IMR-90 (cell line): ENCODE measurements at regions of chr1 and their contacts with region 1.

Region 1: GRCh38 chr1:179365320-179366092 is at the start of gene AXDND1:
- DNase-seq: peak; percentile 80
- ATAC-seq: peak; percentile 95
- H3K4me3 ChIP-seq: peak within 1 kb of the TSS; percentile 58
- H3K27ac ChIP-seq: peak within 1 kb of the TSS; percentile 91
- H3K4me1 ChIP-seq: peaks cover 3% of the 10 kb centered on the region; the same call in 1 of the 2 replicates
- H3K27me3 ChIP-seq: no peaks in the 10 kb centered on the region
- CTCF ChIP-seq: peak; percentile 28
- POLR2A ChIP-seq: no peak; the same call in 1 of the 2 replicates
- RAD21 ChIP-seq: no peak
- total RNA-seq, gene AXDND1: under 0.01 TPM in 1 of 2 replicates, not detected in the other

Region 2: GRCh38 chr1:178294654-178295053 is 1070.9 kb before region 1 on chr1:
- CTCF ChIA-PET with region 1: no interaction called
- POLR2A ChIA-PET with region 1: no interaction called
- dilution Hi-C with region 1: no loop called
- in situ Hi-C with region 1: no loop called
- intact Hi-C with region 1: loop called (anchors 5 kb)
- DNase-seq: no peak
- ATAC-seq: no peak
- H3K4me3 ChIP-seq: no peak overlapping the region
- H3K27ac ChIP-seq: no peak overlapping the region
- H3K4me1 ChIP-seq: peaks cover 3% of the 10 kb centered on the region
- H3K27me3 ChIP-seq: no peaks in the 10 kb centered on the region
- CTCF ChIP-seq: no peak
- POLR2A ChIP-seq: no peak
- RAD21 ChIP-seq: no peak

Region 3: DNA sequence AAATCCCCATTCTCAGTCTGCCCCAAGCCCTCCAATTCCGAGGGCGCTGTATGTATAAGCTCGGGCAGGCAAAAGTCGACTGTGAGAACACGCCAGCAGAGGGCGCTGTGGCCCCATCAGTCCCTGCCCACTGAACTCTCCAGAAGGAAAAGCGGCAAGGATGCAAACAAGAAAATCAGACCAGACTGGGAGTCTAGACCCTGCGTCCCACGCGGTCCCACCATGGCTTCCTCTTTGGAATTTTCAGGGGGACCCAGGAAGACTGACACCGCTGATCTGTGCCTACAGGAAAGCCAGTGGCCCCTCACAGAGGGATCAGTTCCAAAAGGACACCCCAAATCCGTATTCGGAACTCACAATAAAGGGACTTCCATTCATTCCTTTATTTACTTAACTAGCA is 833.1 kb before region 1 on chr1:
- CTCF ChIA-PET with region 1: no interaction called
- POLR2A ChIA-PET with region 1: no interaction called
- dilution Hi-C with region 1: no loop called
- in situ Hi-C with region 1: loop called (anchors 10 kb)
- intact Hi-C with region 1: loop called (anchors 5 kb)
- DNase-seq: peak; percentile 78
- ATAC-seq: peak; percentile 53
- H3K4me3 ChIP-seq: no peak overlapping the region
- H3K27ac ChIP-seq: no peak overlapping the region
- H3K4me1 ChIP-seq: peaks cover 19% of the 10 kb centered on the region
- H3K27me3 ChIP-seq: no peaks in the 10 kb centered on the region
- CTCF ChIP-seq: peak; percentile 92
- POLR2A ChIP-seq: no peak
- RAD21 ChIP-seq: peak; percentile 93

Region 4: DNA sequence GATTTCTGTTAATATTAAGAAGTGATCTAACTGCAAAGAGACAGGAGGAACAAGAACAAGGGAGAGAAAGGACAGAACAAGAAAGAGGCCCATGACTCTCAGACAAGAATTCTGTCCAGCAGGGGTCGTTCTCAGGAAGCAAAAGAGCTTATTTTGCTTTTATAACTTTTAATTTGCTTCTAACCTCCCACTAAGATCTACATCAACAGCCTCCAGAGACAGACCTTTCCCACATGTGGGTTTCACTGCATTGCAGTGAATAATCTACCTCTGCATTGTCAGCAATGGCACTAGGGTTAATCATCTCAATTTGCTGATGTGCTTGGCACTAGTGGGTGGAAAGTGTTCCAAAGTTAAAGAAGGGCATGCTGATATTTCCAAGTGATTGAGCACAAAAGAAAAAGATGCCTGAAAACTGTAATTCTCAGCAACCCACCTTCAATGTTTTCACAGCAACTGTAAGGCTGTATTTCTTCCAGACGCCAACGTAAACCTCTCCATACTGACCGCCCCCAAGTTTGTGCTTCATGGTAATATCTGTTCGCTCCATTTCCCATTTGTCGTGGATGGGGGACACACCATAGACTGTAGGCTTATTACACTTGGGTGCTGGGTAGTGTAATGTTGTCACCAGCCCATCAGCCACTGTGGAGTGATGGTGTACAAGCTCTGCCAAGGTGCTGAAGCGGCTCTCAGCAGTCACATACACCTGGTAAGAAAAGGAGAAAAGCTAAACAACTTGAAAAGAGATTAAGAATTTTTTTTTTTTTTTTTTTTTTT is 244.2 kb before region 1 on chr1:
- CTCF ChIA-PET with region 1: no interaction called
- POLR2A ChIA-PET with region 1: no interaction called
- dilution Hi-C with region 1: no loop called
- in situ Hi-C with region 1: no loop called
- intact Hi-C with region 1: loop called (anchors 2 kb)
- DNase-seq: peak; percentile 62
- ATAC-seq: peak; percentile 66
- H3K4me3 ChIP-seq: no peak overlapping the region
- H3K27ac ChIP-seq: no peak overlapping the region; the same call in 1 of the 2 replicates
- H3K4me1 ChIP-seq: peaks cover 5% of the 10 kb centered on the region
- H3K27me3 ChIP-seq: no peaks in the 10 kb centered on the region
- CTCF ChIP-seq: peak; percentile 64
- POLR2A ChIP-seq: no peak
- RAD21 ChIP-seq: peak; percentile 62

Region 5: GRCh38 chr1:179251675-179252074 is 113.8 kb before region 1 on chr1:
- CTCF ChIA-PET with region 1: interaction called, 6 read pairs
- POLR2A ChIA-PET with region 1: interaction called, 10 read pairs
- dilution Hi-C with region 1: no loop called
- in situ Hi-C with region 1: loop called (anchors 5 kb)
- intact Hi-C with region 1: loop called (anchors 1 kb)
- DNase-seq: peak; percentile 67
- ATAC-seq: peak; percentile 88
- H3K4me3 ChIP-seq: no peak overlapping the region
- H3K27ac ChIP-seq: no peak overlapping the region
- H3K4me1 ChIP-seq: peaks cover 2% of the 10 kb centered on the region; the same call in 1 of the 2 replicates
- H3K27me3 ChIP-seq: no peaks in the 10 kb centered on the region
- CTCF ChIP-seq: peak; percentile 68
- POLR2A ChIP-seq: no peak
- RAD21 ChIP-seq: peak; percentile 73

Region 6: DNA sequence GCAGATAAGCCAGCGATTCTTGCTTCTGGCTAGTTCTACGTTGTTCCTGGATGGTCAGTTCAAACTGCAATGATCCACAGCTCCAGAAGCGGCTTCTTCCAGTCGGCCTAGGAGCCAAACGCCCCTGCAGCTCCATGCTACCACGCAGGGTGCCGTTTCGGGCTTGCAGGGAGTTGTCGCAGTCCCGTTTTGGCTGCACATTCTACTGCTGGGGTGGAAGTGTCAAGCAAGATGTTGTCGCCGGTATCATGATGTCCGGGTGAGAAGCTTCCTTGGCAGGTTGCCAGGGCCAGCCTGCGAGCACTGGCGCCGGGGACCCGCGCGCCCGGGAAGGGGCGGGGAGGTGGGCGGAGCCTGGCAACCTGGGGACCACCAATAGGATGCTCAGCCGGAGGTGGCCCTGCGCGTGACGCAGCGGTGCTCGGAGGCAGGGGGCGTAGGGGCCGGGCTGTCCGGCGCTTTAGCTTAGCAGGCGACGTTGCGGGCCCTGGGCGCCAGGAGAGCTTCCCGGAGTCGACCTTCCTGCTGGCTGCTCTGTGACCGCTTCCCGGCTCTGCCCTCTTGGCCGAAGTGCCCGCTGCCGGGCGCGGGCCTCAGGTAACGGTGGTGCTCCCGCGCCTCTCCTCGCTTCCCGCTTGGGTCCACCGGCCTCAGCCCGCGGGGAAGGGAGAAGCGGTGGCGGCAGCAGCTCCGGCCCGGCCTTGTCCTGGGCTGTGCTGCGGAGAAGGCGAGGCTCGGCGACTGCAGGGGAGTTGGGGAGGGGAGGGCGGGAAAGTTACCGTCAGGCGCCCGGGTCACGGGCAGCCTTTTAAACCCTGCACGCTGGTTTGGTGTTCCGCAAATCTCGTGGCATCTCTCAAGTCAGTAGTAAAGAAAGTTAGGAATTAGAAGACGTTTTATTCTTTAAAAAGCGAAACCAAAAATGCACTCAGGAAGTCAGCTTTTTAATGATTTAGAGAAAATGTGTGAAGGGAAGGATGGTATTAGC is 71.9 kb before region 1 on chr1 and contains the start of gene SOAT1:
- CTCF ChIA-PET with region 1: interaction called, 3 read pairs
- POLR2A ChIA-PET with region 1: interaction called, 4 read pairs
- dilution Hi-C with region 1: no loop called
- in situ Hi-C with region 1: no loop called
- intact Hi-C with region 1: loop called (anchors 1 kb)
- DNase-seq: peak; percentile 88
- ATAC-seq: peak; percentile 98
- H3K4me3 ChIP-seq: peak within 1 kb of the TSS; percentile 85
- H3K27ac ChIP-seq: peak within 1 kb of the TSS; percentile 89
- H3K4me1 ChIP-seq: peaks cover 2% of the 10 kb centered on the region; the same call in 1 of the 2 replicates
- H3K27me3 ChIP-seq: no peaks in the 10 kb centered on the region
- CTCF ChIP-seq: peak; percentile 18; the same call in 1 of the 2 replicates
- POLR2A ChIP-seq: peak; percentile 83
- RAD21 ChIP-seq: no peak; the same call in 1 of the 2 replicates
- total RNA-seq, gene SOAT1: 19.5 and 28.9 TPM in 2 replicates